ENCODE measurements at regions of chr13 and their contacts with region 1.

Region 1: GRCh38 chr13:108895220-108895704 is 265.9 kb downstream of the MYO16 start:
- DNase-seq: peak; percentile 38
- H3K4me3 ChIP-seq: no peak overlapping the region
- H3K27ac ChIP-seq: no peak overlapping the region
- H3K4me1 ChIP-seq: peaks cover 0 to 3% of the 10 kb centered on the region in 2 experiments; a peak in 1 of 4 replicates
- H3K27me3 ChIP-seq: no peaks in the 10 kb centered on the region
- CTCF ChIP-seq: peak; percentile 68
- EP300 ChIP-seq: no peak
- RAD21 ChIP-seq: peak; percentile 81

Region 2: GRCh38 chr13:108322206-108322824 is 572.9 kb before region 1 on chr13:
- CTCF ChIA-PET with region 1: interaction called, 19 read pairs
- POLR2A ChIA-PET with region 1: no interaction called
- DNase-seq: peak; percentile 36
- H3K4me3 ChIP-seq: no peak overlapping the region
- H3K27ac ChIP-seq: no peak overlapping the region
- H3K4me1 ChIP-seq: no peaks in the 10 kb centered on the region
- H3K27me3 ChIP-seq: no peaks in the 10 kb centered on the region
- CTCF ChIP-seq: peak; percentile 89
- EP300 ChIP-seq: no peak
- RAD21 ChIP-seq: peak; percentile 80

Region 3: GRCh38 chr13:108342369-108343289 is 552.6 kb before region 1 on chr13:
- CTCF ChIA-PET with region 1: interaction called, 70 read pairs
- POLR2A ChIA-PET with region 1: no interaction called
- DNase-seq: peak; percentile 23
- H3K4me3 ChIP-seq: no peak overlapping the region; a peak in 1 of 4 replicates
- H3K27ac ChIP-seq: no peak overlapping the region
- H3K4me1 ChIP-seq: no peaks in the 10 kb centered on the region
- H3K27me3 ChIP-seq: peaks cover 7% of the 10 kb centered on the region; the same call in 1 of the 2 replicates
- CTCF ChIP-seq: peak; percentile 65
- EP300 ChIP-seq: no peak
- RAD21 ChIP-seq: peak; percentile 64

Region 4: GRCh38 chr13:108609353-108609752 is 285.9 kb before region 1 on chr13:
- CTCF ChIA-PET with region 1: interaction called, 129 read pairs
- POLR2A ChIA-PET with region 1: no interaction called
- DNase-seq: peak; percentile 33
- H3K4me3 ChIP-seq: no peak overlapping the region
- H3K27ac ChIP-seq: no peak overlapping the region
- H3K4me1 ChIP-seq: no peaks in the 10 kb centered on the region
- H3K27me3 ChIP-seq: no peaks in the 10 kb centered on the region
- CTCF ChIP-seq: peak; percentile 39
- EP300 ChIP-seq: no peak
- RAD21 ChIP-seq: peak; percentile 74

Region 5: DNA sequence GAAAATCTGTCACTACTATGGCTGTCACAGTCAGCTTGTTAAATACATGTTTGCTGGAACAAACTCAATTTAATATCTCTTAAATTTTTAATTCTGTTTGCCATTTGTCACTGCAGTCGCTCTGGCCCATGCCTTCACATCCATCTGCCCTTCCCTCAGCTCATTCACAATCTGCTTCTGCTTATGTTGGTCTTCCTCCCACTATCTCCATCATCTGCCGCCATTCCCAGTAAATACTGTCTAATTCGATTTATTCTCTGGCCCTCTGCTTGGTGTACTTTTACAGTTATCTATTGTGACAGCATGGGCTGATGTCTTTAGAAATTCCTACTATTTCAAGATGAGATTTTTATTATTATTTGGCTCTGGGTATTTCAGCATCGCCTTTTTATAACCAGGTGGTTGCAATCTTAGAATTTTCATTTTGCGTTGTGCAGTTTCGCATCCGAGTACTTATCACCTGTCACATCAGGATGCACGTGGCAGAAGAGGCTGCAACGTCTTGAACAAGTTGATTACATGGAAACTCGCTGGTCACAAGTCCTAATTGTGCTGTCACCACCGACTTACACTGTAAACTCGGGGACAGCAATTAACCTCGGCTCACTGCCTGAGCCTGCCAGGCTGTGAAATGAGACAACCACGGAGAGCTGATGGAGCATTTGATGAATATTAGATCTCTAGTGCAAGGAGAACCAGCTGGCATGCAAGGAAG is 107.4 kb before region 1 on chr13:
- CTCF ChIA-PET with region 1: interaction called, 11 read pairs
- POLR2A ChIA-PET with region 1: no interaction called
- DNase-seq: peak; percentile 70
- H3K4me3 ChIP-seq: peak overlapping the region in 1 of 2 experiments; percentile 17; a peak in 1 of 4 replicates
- H3K27ac ChIP-seq: peak overlapping the region in 1 of 2 experiments; percentile 70; a peak in 2 of 4 replicates
- H3K4me1 ChIP-seq: peaks cover 0 to 18% of the 10 kb centered on the region in 2 experiments; a peak in 2 of 4 replicates
- H3K27me3 ChIP-seq: no peaks in the 10 kb centered on the region
- CTCF ChIP-seq: no peak
- EP300 ChIP-seq: peak in 1 of 2 experiments; percentile 85; a peak in 2 of 4 replicates
- RAD21 ChIP-seq: no peak; the same call in 1 of the 2 replicates